ENCODE measurements at regions of chr9 and their contacts with region 1.

Region 1: GRCh38 chr9:75088260-75088905 is at the start of gene OSTF1:
- DNase-seq: peak; percentile 94 to 98 (median 97)
- ATAC-seq: peak; percentile 91
- H3K4me3 ChIP-seq: peak within 1 kb of the TSS; percentile 85
- H3K4me1 ChIP-seq: peaks cover 32% of the 10 kb centered on the region
- CTCF ChIP-seq: peak; percentile 27
- total RNA-seq, gene OSTF1: 40.6 to 71.2 (median 63.9) TPM

Region 2: DNA sequence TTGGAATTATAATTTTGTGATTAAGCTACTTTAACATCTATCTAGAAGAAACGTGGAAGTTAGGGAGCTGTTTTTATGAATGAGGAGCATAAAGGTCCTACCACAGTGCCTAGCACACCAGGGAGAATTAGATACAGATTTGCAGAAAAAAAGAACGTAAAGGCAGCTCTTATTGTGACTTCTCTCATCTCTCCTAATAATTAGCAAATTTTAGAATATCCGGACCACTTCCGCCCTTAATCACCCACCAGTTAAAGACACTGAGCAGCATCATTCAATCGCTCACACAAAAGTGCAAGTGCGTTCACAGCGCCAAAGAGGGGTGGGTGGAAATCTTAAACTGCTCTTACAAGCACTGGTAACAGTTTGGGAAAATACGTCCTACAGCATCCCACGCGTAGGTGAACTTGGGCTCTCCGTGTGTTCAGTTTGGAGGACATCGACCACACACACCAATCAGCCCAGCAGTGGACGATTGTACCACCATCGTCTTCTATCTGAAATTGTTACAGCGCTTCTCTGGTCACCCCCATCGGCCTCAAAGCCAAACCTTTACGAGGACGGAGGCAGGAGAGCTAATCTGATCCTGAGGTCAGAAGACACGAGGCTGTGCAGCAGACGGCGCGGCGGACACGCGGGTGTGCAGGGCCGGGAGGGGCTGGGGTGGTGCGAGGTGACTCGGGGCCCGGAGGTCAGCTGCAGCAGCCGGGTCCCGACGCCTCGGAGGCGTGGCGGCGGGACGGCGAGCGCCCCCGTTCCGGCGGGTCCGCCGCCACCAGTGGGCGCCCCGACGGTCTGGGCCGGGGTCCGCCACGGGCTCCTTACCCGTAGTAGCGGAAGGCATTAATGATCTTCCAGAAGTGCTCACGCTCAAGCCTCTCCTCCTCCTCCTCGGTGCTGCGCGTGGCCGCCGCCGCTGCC is 60.9 kb before region 1 on chr9:
- intact Hi-C with region 1: loop called in 1 of 2 experiments (anchors 10 kb)
- DNase-seq: peak; percentile 72 to 87 (median 82)
- ATAC-seq: peak; percentile 73
- H3K4me3 ChIP-seq: peak overlapping the region; percentile 67
- H3K4me1 ChIP-seq: peaks cover 9% of the 10 kb centered on the region
- CTCF ChIP-seq: no peak

Region 3: DNA sequence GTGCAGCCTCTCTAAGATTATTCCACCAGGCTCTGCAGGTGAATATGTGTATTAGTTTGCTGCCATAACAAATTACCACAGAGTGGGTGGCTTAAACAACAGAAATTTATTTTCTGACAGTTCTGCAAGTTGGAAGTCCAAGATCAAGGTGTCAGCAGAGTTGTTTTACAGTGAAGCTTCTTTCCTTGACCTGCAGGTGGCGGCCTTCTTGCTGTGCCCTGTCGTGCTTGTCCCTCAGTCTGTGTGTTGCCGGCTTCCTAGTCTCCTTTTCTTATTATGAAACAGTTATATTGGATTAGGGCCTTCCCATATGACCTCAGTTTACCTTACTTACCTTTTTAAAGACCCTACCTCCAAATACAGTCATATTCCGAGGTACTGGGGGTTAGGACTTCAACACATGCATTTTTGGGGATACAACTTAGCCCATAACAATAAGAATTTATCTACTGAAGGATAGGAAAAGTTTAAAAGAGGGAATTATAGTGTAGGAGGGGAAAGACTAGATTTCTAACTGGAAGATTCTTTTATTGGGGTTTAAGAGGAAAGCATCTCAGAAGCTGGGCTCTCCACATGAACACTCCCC is 97.3 kb after region 1 on chr9:
- intact Hi-C with region 1: no loop called
- DNase-seq: peak in 2 of 3 donors; percentile 59 to 60
- ATAC-seq: peak; percentile 86
- H3K4me3 ChIP-seq: no peak overlapping the region
- H3K4me1 ChIP-seq: no peaks in the 10 kb centered on the region
- CTCF ChIP-seq: peak; percentile 46

Region 4: GRCh38 chr9:75397836-75398235 is 309.5 kb after region 1 on chr9:
- intact Hi-C with region 1: no loop called
- DNase-seq: no peak
- ATAC-seq: no peak
- H3K4me3 ChIP-seq: no peak overlapping the region
- H3K4me1 ChIP-seq: no peaks in the 10 kb centered on the region
- CTCF ChIP-seq: no peak

Measured in mucosa of descending colon (tissue), 3 donors.